SK-N-SH (cell line): ENCODE measurements at regions of chr4 and their contacts with region 1.

Region 1: DNA sequence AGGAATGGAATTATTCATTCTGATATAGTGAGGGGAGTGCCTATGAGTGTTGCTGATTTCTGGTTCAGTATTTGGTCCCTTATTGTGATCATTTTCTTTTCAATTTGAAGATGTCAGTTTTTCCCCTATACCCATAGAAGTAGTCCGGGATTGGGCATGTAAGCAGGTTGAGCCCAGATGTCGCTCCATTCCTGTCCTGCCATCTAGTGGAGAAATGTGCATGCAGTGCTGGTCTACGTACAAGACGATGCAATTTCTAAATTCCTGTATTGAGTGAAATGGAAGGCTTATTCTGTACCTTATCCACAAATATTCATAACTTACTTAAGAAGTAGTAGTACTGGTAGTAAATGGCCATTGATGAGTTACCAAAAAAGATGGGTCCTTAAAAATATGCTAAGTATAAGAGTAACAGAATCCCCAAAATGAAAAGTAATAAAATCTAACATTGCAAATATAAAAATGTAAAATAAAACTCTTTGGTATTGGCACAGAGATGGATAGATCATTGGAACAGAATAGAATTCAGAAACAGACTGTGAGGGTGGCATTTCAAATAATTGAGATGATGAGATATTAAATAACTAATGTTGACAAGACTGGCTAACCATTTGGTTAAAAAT is 60.9 kb downstream of the UGT8 start:
- DNase-seq: peak; percentile 60
- H3K4me3 ChIP-seq: no peak overlapping the region; a peak in 1 of 4 replicates
- H3K27ac ChIP-seq: no peak overlapping the region
- H3K4me1 ChIP-seq: no peaks in the 10 kb centered on the region
- H3K27me3 ChIP-seq: peaks cover 39% of the 10 kb centered on the region; the same call in 1 of the 2 replicates
- CTCF ChIP-seq: peak; percentile 89
- EP300 ChIP-seq: no peak
- RAD21 ChIP-seq: peak; percentile 79

Region 2: DNA sequence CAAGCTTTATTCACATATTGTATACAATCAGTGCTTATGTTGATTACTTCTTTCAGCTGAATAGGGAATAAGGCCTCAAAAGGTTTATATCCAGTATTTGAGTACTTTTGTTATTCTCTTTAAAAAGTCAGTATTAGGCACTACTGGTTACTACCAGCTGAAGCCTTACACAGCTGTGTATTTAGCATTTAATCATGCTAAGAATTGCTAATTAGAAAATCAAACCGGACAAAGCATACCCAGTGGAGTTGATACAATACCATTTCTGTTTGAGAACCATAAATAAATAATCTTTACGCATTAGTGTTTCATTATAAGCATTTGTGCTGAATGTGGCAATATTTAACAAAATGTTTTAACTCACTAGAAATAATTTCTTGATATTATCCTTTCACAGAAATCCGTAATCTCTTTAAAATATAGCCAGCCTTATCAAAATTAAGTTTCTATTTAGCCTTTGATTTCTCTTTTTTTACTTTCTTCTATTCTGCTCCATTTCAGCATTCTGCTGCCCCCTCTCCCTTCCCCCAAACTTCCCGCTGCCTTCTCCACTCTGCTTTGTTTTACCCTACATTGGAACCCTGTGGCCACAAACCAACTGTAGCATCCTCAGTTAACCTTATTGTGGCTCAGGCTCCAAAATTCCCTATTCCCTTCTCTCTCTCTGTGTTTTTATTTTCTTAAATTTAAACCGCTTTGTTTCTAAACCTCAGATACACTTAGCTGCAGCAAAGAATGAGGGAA is 23.1 kb before region 1 on chr4:
- CTCF ChIA-PET with region 1: interaction called, 10 read pairs
- POLR2A ChIA-PET with region 1: no interaction called
- DNase-seq: no peak
- H3K4me3 ChIP-seq: no peak overlapping the region
- H3K27ac ChIP-seq: no peak overlapping the region
- H3K4me1 ChIP-seq: no peaks in the 10 kb centered on the region
- H3K27me3 ChIP-seq: peaks cover 7% of the 10 kb centered on the region; the same call in 1 of the 2 replicates
- CTCF ChIP-seq: no peak
- EP300 ChIP-seq: no peak
- RAD21 ChIP-seq: no peak

Region 3: DNA sequence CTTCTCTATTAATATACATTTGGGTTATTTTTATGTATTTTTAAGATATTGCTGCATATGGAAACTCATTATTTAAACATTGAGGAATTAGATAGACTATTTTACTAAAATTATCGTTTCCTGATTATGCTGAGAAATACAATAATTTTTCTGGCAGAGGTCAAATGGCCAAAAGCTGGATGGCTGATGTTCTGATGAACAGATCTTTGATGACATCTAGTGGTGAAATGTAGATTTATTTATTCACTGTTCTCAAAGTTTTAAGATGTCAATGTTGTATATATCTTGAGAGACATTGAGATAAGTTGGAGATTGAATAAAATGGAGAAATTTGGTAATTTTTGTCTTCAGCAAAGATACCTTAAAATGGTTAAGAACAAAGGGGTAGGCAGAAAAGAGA is 35.3 kb after region 1 on chr4:
- CTCF ChIA-PET with region 1: interaction called, 10 read pairs
- POLR2A ChIA-PET with region 1: no interaction called
- DNase-seq: peak; percentile 4
- H3K4me3 ChIP-seq: no peak overlapping the region
- H3K27ac ChIP-seq: no peak overlapping the region
- H3K4me1 ChIP-seq: no peaks in the 10 kb centered on the region
- H3K27me3 ChIP-seq: no peaks in the 10 kb centered on the region
- CTCF ChIP-seq: peak; percentile 73
- EP300 ChIP-seq: no peak
- RAD21 ChIP-seq: peak; percentile 80